Activated B cell treated with CpG ODN at 0.5 μM for 24 hours (primary cell): ENCODE measurements at regions of chr17 and their contacts with region 1.

Region 1: DNA sequence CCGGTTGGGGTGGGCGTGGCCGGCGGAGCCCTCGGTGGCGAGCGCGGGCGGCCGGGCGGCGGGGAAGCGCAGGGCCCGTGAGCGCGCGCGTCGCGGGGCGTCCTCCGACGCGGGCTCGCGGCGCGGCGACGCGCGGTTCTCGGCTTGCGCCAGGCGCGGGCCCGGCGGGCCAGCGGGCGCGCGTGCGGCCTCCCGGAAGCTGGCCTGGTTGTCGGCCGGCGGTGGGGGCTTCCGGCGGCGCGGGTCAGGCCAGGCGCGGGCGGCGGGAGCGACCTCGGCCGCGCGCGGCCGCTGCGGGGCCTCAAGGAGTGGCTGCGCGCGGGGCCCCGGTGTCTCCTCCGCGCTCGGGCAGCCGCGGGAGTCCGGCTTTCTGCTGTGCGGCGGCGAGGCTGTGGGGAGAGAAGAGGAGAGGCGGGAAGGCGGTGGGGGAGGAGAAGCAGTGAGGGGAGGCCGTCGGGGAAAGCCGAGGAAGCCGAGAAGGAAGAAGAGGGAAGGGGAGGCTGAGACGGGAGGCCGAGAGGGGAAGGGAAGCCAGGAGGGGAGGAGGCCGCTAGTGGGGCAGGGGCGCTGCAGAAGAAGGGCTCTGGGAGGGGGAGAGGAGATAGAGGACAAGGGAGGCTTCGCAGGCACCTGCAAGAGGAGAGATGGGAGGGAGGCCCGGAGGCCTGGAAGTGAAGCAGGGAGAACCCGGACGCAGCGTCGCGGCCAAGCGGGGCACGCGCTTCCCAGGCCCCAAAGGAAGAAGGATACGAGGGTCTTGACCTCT is 2.5 kb downstream of the C17orf58 start:
- DNase-seq: peak; percentile 75
- ATAC-seq: peak; percentile 81
- H3K4me3 Mint-ChIP-seq: peak overlapping the region; percentile 88
- H3K27ac Mint-ChIP-seq: peak overlapping the region; percentile 82
- H3K4me1 Mint-ChIP-seq: peaks cover 34% of the 10 kb centered on the region
- H3K27me3 Mint-ChIP-seq: peaks cover 18% of the 10 kb centered on the region
- CTCF ChIP-seq: no peak

Region 2: DNA sequence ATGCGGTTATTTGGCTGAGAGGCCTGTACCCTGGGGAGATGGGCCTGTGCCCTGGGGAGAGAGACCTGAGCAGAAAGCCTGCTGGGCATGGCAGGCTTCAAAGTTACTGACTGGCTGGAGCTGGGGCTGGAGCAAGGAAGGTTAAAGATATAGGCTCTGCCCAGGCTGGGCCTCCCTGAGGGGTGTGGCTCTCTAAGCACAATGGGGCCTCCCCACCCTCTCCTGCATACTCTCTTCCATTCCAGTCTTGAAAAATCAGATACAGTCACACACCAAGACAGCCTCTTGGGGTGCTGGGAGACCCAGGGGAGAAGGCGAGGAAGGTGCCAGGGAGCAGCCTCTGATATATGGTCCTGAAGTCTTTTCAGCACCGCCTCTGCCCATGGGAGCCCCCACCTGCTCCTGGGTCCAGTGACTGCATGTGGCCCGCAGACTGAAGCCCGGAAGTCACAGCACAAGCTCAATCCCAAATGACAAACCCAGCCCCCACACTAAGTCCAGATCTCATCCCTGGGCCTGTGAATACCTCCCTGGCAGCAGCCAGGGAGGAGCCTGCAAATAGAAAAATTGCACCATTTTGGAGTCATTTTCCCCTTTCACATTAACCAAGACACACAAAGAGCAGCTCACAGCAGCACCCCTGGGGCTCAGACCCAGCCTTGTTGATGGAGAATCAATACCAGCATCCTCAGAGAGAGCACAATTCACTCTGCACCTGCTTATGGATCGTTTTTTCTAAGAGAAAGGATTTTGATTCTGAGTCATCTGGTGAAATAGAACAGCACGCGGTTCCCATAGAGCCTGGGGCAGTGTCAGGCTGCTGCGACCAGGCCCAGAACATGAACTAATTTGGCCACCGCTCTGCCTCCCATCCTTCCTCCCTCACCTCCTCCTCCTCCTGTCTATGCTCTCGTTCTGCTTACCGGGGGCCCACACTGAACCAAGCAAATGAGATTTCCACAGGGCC is 975.0 kb before region 1 on chr17:
- CTCF ChIA-PET with region 1: no interaction called
- POLR2A ChIA-PET with region 1: no interaction called
- intact Hi-C with region 1: no loop called
- DNase-seq: no peak
- ATAC-seq: no peak
- H3K4me3 Mint-ChIP-seq: no peak overlapping the region
- H3K27ac Mint-ChIP-seq: no peak overlapping the region
- H3K4me1 Mint-ChIP-seq: no peaks in the 10 kb centered on the region
- H3K27me3 Mint-ChIP-seq: peaks cover 4% of the 10 kb centered on the region
- CTCF ChIP-seq: no peak

Region 3: DNA sequence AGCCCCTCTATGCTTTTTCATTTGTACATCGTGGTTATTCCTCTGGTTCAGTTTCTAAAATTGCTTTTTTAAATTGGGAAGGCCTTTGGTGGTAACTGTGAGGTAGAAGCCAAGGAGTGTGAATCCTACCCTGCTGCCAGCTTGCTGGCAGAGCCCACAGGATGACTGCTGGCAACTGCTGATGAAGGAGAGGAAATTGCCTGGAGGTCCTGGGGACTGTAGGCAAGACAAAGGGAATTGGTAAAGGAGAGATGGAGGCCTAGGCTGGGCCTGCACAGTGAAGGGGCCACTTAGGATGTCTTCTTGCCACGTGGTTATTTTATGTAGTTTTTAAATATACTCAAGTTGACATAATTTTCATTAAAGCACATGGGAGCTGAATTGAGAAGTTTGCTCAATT is 13.3 kb before region 1 on chr17:
- CTCF ChIA-PET with region 1: no interaction called
- POLR2A ChIA-PET with region 1: interaction called, 13 read pairs
- intact Hi-C with region 1: no loop called
- DNase-seq: no peak
- ATAC-seq: no peak
- H3K4me3 Mint-ChIP-seq: no peak overlapping the region
- H3K27ac Mint-ChIP-seq: peak overlapping the region; percentile 65
- H3K4me1 Mint-ChIP-seq: peaks cover 15% of the 10 kb centered on the region
- H3K27me3 Mint-ChIP-seq: no peaks in the 10 kb centered on the region
- CTCF ChIP-seq: no peak

Region 4: DNA sequence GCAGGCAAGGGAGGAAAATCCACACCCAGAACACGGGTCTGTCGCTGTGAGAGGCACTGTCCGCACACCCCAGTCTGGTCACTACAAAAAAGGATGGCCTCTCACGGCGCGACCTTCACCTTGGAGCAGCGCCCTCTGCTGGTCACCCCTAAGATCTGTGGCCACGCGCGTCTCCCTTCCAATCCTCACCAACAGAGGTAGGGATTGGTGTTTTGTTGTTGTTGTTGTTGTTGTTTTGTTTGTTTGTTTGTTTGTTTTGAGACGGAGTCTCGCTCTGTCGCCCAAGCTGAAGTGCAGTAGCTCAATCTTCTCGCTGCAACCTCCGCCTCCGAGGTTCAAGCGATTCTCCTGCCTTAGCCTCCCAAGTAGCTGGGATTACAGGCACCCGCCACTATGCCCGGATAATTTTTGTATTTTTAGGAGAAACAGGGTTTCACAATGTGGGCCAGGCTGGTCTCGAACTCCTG is 17.5 kb after region 1 on chr17:
- CTCF ChIA-PET with region 1: interaction called, 3 read pairs
- POLR2A ChIA-PET with region 1: interaction called, 10 read pairs
- intact Hi-C with region 1: loop called (anchors 2 kb)
- DNase-seq: peak; percentile 45
- ATAC-seq: peak; percentile 65
- H3K4me3 Mint-ChIP-seq: no peak overlapping the region
- H3K27ac Mint-ChIP-seq: no peak overlapping the region
- H3K4me1 Mint-ChIP-seq: peaks cover 5% of the 10 kb centered on the region
- H3K27me3 Mint-ChIP-seq: peaks cover 8% of the 10 kb centered on the region
- CTCF ChIP-seq: no peak

Region 5: DNA sequence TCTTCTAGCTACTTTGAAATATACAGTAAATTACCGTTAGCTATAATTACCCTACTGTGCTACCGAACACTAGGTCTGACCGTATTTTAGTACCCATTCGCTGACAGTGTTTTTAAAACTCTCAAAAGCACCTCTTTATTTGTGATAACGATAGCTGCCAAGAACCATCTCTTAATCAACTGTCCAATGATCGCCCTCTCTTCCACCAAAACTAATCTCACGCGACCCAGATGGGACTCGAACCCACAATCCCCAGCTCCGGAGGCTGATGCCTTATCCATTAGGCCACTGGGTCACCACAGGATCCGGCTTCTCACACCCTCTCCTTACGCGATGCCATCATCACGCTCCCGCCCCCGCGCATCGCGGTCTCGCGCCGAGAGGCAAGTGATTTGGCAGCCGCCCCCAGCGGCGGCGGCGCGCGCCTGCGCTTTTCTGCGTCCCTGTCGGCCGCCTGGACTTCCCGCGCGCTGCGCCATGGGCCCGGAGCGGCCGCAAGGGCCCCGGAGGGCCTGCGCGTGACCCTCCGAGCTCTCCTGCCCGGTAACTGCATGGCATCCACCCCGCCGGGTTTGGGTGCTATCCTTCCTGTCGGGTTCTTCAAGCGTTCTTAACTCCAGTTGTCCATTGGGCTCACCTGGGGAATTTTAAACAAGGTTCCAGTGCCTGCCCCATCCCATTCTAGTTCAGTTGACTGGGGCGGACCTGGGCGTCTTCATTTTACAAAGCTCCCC is 26.1 kb after region 1 on chr17:
- CTCF ChIA-PET with region 1: interaction called, 3 read pairs
- POLR2A ChIA-PET with region 1: interaction called, 19 read pairs
- intact Hi-C with region 1: loop called (anchors 1 kb)
- DNase-seq: peak; percentile 99
- ATAC-seq: peak; percentile 90
- H3K4me3 Mint-ChIP-seq: peak overlapping the region; percentile 90
- H3K27ac Mint-ChIP-seq: peak overlapping the region; percentile 90
- H3K4me1 Mint-ChIP-seq: peaks cover 14% of the 10 kb centered on the region
- H3K27me3 Mint-ChIP-seq: peaks cover 2% of the 10 kb centered on the region
- CTCF ChIP-seq: no peak

Region 6: GRCh38 chr17:68047153-68047846 is 53.5 kb after region 1 on chr17:
- CTCF ChIA-PET with region 1: no interaction called
- POLR2A ChIA-PET with region 1: no interaction called
- intact Hi-C with region 1: no loop called
- DNase-seq: no peak
- ATAC-seq: no peak
- H3K4me3 Mint-ChIP-seq: no peak overlapping the region
- H3K27ac Mint-ChIP-seq: no peak overlapping the region
- H3K4me1 Mint-ChIP-seq: no peaks in the 10 kb centered on the region
- H3K27me3 Mint-ChIP-seq: no peaks in the 10 kb centered on the region
- CTCF ChIP-seq: no peak

Region 7: GRCh38 chr17:68101075-68101992 is 107.6 kb after region 1 on chr17:
- CTCF ChIA-PET with region 1: no interaction called
- POLR2A ChIA-PET with region 1: no interaction called
- intact Hi-C with region 1: loop called (anchors 10 kb)
- DNase-seq: peak; percentile 75
- ATAC-seq: peak; percentile 86
- H3K4me3 Mint-ChIP-seq: peak overlapping the region; percentile 93
- H3K27ac Mint-ChIP-seq: peak overlapping the region; percentile 85
- H3K4me1 Mint-ChIP-seq: peaks cover 31% of the 10 kb centered on the region
- H3K27me3 Mint-ChIP-seq: no peaks in the 10 kb centered on the region
- CTCF ChIP-seq: no peak